GM13976 (cell line): ENCODE measurements at regions of chr4 and their contacts with region 1.

Region 1: DNA sequence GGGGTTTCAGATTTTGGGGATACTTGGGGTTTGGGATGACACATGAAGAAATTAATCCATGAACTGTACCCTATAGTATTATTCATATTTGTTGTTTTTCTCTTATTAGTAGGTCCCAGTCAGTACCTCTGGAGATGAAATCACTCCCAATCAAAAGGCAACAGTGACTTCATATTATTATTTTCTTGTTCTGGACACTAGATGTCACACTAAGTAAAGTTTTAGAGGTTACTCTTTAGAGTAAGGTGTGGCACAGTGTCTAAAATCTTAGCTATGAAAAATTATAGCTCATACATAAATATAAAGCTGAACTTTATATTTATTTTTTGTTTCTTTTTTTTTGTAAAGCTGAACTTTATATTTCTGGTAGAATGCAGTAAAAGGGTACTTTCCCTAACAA is 35.1 kb downstream of the FAM114A1 start:
- DNase-seq: peak; percentile 58
- CTCF ChIP-seq: no peak

Region 2: DNA sequence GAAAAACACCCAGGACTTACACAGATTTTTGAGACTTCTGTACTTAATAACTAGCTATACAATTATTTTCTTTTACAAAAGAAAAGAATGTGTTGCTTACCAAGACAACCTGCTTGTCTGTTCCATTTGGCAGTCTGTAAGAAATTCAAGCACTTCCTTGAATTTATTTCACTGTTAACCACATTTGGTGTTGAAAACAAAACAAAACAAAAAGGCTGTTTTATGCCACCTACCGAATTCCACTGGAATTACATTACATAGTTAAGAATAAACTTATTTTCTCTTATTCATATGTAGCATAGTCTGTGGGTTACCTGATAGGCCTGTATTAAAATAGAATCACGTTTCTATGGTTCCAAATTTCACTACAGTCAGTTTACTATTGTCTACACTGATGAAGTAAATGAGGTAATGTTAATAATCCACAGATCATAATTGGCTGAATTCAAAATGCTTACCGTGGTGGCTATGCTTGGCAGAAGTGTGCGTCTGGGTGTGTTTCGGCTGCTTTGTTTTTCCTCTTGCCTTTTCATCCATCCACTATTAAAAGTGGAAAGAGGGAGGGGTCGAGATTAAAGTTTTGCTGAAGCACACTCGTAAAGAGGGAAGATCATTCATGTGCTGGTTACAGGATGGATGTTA is 97.9 kb before region 1 on chr4 and contains the start of gene TLR1:
- in situ Hi-C with region 1: no loop called
- DNase-seq: no peak
- CTCF ChIP-seq: no peak

Region 3: GRCh38 chr4:38815885-38816782 is 86.6 kb before region 1 on chr4:
- in situ Hi-C with region 1: no loop called
- DNase-seq: peak; percentile 51
- CTCF ChIP-seq: no peak

Region 4: GRCh38 chr4:39134683-39135319 is 232.1 kb after region 1 on chr4:
- in situ Hi-C with region 1: loop called (anchors 5 kb)
- DNase-seq: peak; percentile 18
- CTCF ChIP-seq: no peak

Region 5: GRCh38 chr4:39446751-39447573 is 544.3 kb after region 1 on chr4:
- in situ Hi-C with region 1: loop called (anchors 10 kb)
- DNase-seq: peak; percentile 86
- CTCF ChIP-seq: no peak